PC-9 (cell line): ENCODE measurements at regions of chr15 and their contacts with region 1.

Region 1: GRCh38 chr15:45743426-45744235 is 108.8 kb downstream of the SQOR start:
- DNase-seq: no peak
- H3K4me3 ChIP-seq: no peak overlapping the region
- H3K27ac ChIP-seq: no peak overlapping the region
- H3K4me1 ChIP-seq: no peaks in the 10 kb centered on the region
- H3K27me3 ChIP-seq: peaks cover 6% of the 10 kb centered on the region
- CTCF ChIP-seq: no peak

Region 2: GRCh38 chr15:45773149-45773548 is 29.5 kb after region 1 on chr15:
- CTCF ChIA-PET with region 1: no interaction called
- POLR2A ChIA-PET with region 1: interaction called, 15 read pairs
- intact Hi-C with region 1: no loop called
- DNase-seq: no peak
- H3K4me3 ChIP-seq: no peak overlapping the region
- H3K27ac ChIP-seq: no peak overlapping the region
- H3K4me1 ChIP-seq: no peaks in the 10 kb centered on the region
- H3K27me3 ChIP-seq: peaks cover 28% of the 10 kb centered on the region
- CTCF ChIP-seq: no peak

Region 3: DNA sequence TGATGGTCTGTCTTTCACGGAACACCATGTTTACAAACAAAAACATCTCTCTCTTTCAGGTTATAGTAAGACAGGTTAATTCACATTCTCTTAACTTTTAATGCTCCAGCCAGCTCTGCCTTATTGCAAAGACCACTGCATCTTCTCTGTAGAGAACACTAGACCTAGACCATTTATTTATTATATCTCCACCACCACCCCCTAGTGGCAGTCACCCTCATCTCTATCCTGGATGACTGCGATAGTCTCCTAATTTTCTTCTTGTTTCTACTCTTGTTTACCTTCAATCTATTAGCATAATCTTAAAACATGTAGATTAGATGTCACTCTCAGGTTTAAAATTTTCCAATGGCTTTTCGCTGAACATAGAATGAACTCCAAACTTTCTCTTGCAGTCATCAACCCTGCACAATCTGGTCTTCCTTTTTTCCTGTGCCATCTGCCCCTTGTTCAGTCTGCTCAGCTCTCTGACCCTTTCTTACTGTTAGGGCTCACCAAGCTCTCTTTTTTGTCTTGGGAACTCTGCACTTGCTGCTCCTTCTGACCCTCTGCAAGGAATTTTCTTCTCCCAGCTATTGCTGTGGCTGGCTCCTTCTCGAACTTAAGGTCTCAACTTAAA is 46.8 kb after region 1 on chr15:
- CTCF ChIA-PET with region 1: no interaction called
- POLR2A ChIA-PET with region 1: no interaction called
- intact Hi-C with region 1: no loop called
- DNase-seq: no peak
- H3K4me3 ChIP-seq: no peak overlapping the region
- H3K27ac ChIP-seq: no peak overlapping the region
- H3K4me1 ChIP-seq: 0 out of 2 replicates have a peak, but pooled peaks cover 8% of the 10 kb centered on the region
- H3K27me3 ChIP-seq: no peaks in the 10 kb centered on the region
- CTCF ChIP-seq: peak; percentile 65

Region 4: DNA sequence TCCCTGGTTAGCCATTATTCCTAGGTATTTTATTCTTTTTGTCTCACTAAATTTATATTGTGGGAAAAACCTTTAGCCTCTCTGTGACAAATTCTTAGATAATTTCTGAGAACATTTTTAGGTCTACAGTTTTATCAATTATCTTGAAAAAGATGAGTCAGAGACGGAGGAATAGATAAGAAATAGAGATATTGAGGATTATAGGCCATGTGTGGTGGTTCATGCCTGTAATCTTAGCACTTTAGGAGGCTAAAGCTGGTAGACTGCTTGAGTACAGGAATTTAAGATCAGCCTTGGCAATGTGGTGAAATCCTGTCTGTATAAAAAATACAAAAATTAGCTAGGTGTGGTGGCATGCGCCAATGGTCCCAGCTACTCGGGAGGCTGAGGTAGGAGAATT is 851.4 kb after region 1 on chr15:
- CTCF ChIA-PET with region 1: no interaction called
- POLR2A ChIA-PET with region 1: interaction called, 10 read pairs
- intact Hi-C with region 1: no loop called
- DNase-seq: no peak
- H3K4me3 ChIP-seq: no peak overlapping the region
- H3K27ac ChIP-seq: no peak overlapping the region
- H3K4me1 ChIP-seq: no peaks in the 10 kb centered on the region
- H3K27me3 ChIP-seq: no peaks in the 10 kb centered on the region
- CTCF ChIP-seq: no peak